Dorsolateral prefrontal cortex (tissue), 120 donors: ENCODE measurements at regions of chr2 and their contacts with region 1.

Region 1: DNA sequence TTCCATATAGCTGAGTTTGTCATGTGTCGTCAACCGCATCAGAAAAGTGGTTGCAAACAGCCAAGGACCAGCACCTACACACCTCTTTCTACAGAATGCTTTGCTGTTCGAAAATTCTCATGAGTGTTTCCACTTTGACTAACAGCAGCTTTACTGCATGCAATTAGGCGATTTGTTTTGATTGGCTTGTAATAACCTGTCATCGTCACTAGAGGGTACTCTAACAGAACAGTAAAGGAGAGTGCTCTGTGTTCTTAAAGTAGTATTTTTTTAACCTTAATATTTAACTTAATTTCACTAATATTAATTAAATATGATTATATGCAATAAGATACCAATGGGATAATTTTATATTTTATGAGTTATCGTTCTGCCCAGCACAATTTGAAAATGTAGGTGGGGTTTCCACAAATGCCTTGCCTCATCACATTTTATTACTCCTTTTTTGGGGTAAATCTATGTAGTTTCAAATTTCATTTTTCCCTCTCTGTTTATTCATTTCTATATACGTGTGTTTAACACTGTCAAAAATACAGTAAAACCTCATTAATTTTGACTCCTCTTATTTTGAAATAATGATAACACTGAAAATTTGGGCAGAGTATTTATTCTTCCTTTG is 502.2 kb downstream of the NRXN1 start:
- DNase-seq: no peak
- H3K4me3 ChIP-seq: peak overlapping the region in 14 of 59 donors; percentile 4 to 42 (median 14)
- H3K27ac ChIP-seq: peak overlapping the region in 1 of 59 donors; percentile 1
- H3K27me3 ChIP-seq: no peaks in the 10 kb centered on the region
- CTCF ChIP-seq: peak; percentile 57 to 93 (median 77)

Region 2: GRCh38 chr2:50364511-50364910 is 165.2 kb before region 1 on chr2:
- intact Hi-C with region 1: no loop called
- DNase-seq: no peak
- H3K4me3 ChIP-seq: no peak overlapping the region
- H3K27ac ChIP-seq: no peak overlapping the region
- H3K27me3 ChIP-seq: no peaks in the 10 kb centered on the region
- CTCF ChIP-seq: no peak

Region 3: DNA sequence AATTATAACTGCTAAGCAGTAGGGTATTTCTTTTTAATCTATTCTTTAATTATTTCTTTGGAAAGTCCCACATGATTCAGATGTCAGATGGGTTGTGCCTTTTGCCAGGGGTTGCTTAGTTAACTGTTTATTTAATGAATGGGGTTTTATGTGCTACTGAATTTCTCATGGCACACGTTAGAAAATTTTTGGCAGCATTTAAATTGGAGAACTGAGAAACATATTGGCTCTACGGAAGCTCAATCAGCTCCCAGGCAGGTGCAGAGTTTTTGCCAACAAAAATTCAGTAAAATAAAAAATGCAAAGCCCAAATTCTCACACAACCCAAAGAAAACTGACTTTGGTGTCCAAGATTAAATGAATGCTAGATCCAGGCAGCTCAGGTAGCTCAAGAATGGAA is 35.1 kb after region 1 on chr2:
- intact Hi-C with region 1: no loop called
- DNase-seq: peak in 1 of 10 donors; percentile 15
- H3K4me3 ChIP-seq: no peak overlapping the region
- H3K27ac ChIP-seq: peak overlapping the region in 3 of 59 donors; percentile 8 to 44 (median 24)
- H3K27me3 ChIP-seq: no peaks in the 10 kb centered on the region
- CTCF ChIP-seq: no peak

Region 4: GRCh38 chr2:51028829-51029228 is 499.1 kb after region 1 on chr2:
- intact Hi-C with region 1: loop called (anchors 10 kb)
- DNase-seq: peak in 3 of 10 donors; percentile 36 to 39 (median 38)
- H3K4me3 ChIP-seq: peak overlapping the region in 55 of 59 donors; percentile 0 to 77 (median 61)
- H3K27ac ChIP-seq: peak overlapping the region in 40 of 59 donors; percentile 4 to 85 (median 46)
- H3K27me3 ChIP-seq: peaks cover 0 to 48% (median 0%) of the 10 kb centered on the region in 45 donors
- CTCF ChIP-seq: no peak